CD8-positive, alpha-beta T cell (primary cell): ENCODE measurements at regions of chr2 and their contacts with region 1.

Region 1: GRCh38 chr2:69694894-69695849 is 46.8 kb upstream of the ANXA4 start:
- DNase-seq: no peak
- ATAC-seq: no peak
- H3K4me3 ChIP-seq: no peak overlapping the region
- H3K4me3 Mint-ChIP-seq: peak overlapping the region; percentile 10
- H3K27ac ChIP-seq: peak overlapping the region in 1 of 2 experiments; percentile 4
- H3K27ac Mint-ChIP-seq: peak overlapping the region; percentile 98
- H3K4me1 ChIP-seq: peaks cover 83% of the 10 kb centered on the region
- H3K4me1 Mint-ChIP-seq: peaks cover 91% of the 10 kb centered on the region
- H3K27me3 ChIP-seq: no peaks in the 10 kb centered on the region
- H3K27me3 Mint-ChIP-seq: no peaks in the 10 kb centered on the region
- CTCF ChIP-seq: no peak

Region 2: DNA sequence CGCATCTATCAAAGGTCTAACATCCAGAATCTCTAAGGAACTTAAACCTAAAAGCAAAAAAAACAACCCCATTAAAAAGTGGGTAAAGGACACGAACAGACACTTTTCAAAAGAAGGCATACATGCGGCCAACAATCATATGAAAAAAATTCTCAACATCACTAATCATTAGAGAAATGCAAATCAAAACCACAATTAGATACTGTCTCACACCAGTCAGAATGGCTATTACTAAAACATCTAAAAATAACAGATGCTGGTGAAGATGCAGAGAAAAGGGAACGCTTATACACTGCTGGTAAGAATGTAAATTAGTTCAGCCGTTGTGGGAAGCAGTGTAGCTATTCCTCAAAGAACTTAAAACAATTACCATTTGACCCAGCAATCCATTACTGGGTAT is 1480.8 kb before region 1 on chr2:
- CTCF ChIA-PET with region 1: no interaction called
- POLR2A ChIA-PET with region 1: no interaction called
- intact Hi-C with region 1: no loop called
- DNase-seq: no peak
- ATAC-seq: no peak
- H3K4me3 ChIP-seq: no peak overlapping the region
- H3K4me3 Mint-ChIP-seq: no peak overlapping the region
- H3K27ac ChIP-seq: no peak overlapping the region
- H3K27ac Mint-ChIP-seq: peak overlapping the region; percentile 15
- H3K4me1 ChIP-seq: peaks cover 34% of the 10 kb centered on the region
- H3K4me1 Mint-ChIP-seq: peaks cover 82% of the 10 kb centered on the region
- H3K27me3 ChIP-seq: no peaks in the 10 kb centered on the region
- H3K27me3 Mint-ChIP-seq: no peaks in the 10 kb centered on the region
- CTCF ChIP-seq: no peak

Region 3: GRCh38 chr2:69683101-69683971 is 11.8 kb before region 1 on chr2:
- CTCF ChIA-PET with region 1: interaction called, 3 read pairs
- POLR2A ChIA-PET with region 1: interaction called, 8 read pairs
- intact Hi-C with region 1: loop called in 1 of 2 experiments (anchors 1 kb)
- DNase-seq: peak in 1 of 9 experiments; percentile 20
- ATAC-seq: no peak
- H3K4me3 ChIP-seq: no peak overlapping the region
- H3K4me3 Mint-ChIP-seq: peak overlapping the region; percentile 32
- H3K27ac ChIP-seq: no peak overlapping the region
- H3K27ac Mint-ChIP-seq: peak overlapping the region; percentile 86
- H3K4me1 ChIP-seq: peaks cover 26% of the 10 kb centered on the region
- H3K4me1 Mint-ChIP-seq: peaks cover 58% of the 10 kb centered on the region
- H3K27me3 ChIP-seq: no peaks in the 10 kb centered on the region
- H3K27me3 Mint-ChIP-seq: no peaks in the 10 kb centered on the region
- CTCF ChIP-seq: no peak